Head of caudate nucleus (tissue), 42 donors: ENCODE measurements at regions of chr2 and their contacts with region 1.

Region 1: GRCh38 chr2:48205137-48205798 is 299.0 kb upstream of the FBXO11 start:
- DNase-seq: peak; percentile 14 to 95 (median 80)

Region 2: GRCh38 chr2:48414980-48415835 is 209.9 kb after region 1 on chr2:
- intact Hi-C with region 1: loop called (anchors 10 kb)
- DNase-seq: peak; percentile 68 to 93 (median 82)

Region 3: GRCh38 chr2:48551548-48551947 is 346.3 kb after region 1 on chr2:
- intact Hi-C with region 1: no loop called
- DNase-seq: peak in 1 of 42 donors; percentile 9